Transverse colon (tissue), 4 donors: ENCODE measurements at regions of chr10 and their contacts with region 1.

Region 1: DNA sequence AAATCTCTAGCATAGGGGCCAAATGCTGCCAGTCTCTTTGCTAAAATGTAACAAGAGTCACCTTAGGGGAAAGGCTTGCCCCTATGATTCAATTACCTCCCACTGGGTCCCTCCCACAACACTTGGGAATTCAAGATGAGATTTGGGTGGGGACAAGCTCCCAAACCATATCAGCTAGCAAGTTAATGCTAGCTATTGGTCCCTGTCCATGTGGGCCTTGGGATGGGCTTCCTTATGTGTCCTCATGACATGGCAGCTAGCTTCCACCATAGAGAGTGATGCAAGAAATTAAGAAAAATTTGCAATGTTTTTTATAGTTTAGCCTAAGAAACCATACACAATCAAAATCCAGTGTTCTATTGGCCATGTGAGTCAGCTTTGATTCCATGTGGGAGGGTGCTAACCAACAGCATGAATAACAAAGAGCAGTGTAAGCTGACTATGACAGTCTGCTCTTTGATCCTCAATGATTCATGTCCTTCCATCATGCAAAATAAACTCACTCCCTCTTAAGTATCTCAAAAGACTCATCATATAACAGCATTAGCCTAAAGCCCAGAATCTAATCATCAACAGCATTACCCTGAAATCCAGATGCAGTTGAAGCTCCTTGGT is 21.7 kb upstream of the ZNF365 start:
- DNase-seq: no peak
- H3K4me3 ChIP-seq: no peak overlapping the region
- H3K27ac ChIP-seq: no peak overlapping the region
- H3K4me1 ChIP-seq: no peaks in the 10 kb centered on the region
- H3K27me3 ChIP-seq: no peaks in the 10 kb centered on the region
- CTCF ChIP-seq: no peak
- EP300 ChIP-seq: no peak
- POLR2A ChIP-seq: no peak

Region 2: GRCh38 chr10:62517252-62517651 is 164.8 kb after region 1 on chr10:
- in situ Hi-C with region 1: no loop called
- intact Hi-C with region 1: loop called (anchors 5 kb)
- DNase-seq: no peak
- H3K4me3 ChIP-seq: no peak overlapping the region
- H3K27ac ChIP-seq: no peak overlapping the region
- H3K4me1 ChIP-seq: no peaks in the 10 kb centered on the region
- H3K27me3 ChIP-seq: no peaks in the 10 kb centered on the region
- CTCF ChIP-seq: no peak
- EP300 ChIP-seq: no peak
- POLR2A ChIP-seq: no peak